Ovary (tissue), 10 donors: ENCODE measurements at regions of chr6 and their contacts with region 1.

Region 1: DNA sequence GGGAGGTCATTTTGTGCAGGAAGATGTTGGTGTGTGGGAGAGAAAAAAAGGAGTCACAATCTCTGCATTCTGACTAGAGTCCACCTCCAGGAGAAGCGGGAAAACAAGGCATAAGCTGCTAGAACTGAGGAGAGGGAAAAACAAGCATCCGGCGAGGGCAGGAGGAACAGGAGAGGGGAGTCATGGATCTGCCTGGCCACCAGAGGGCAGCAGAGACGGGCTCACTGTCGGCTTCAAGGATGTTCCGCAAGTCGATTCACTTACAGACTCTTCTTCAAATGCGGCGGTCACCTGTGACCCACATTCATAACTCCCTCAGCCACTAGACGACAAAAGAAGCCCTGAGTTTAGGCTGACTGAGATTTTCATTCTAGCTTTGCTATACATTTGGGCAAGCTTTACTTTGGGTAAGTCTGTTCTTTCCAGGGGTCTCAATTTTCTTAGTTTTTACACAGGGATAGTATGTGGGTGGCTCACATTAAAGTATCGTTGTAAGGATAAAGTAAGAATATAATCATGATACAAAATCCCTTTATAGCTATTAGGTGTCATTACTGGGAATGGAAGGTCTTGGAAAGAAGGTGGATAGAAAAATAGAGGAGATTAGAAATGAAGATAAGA is 6.6 kb upstream of the BTNL2 start:
- DNase-seq: peak; percentile 70 to 86 (median 79)
- H3K4me3 ChIP-seq: no peak overlapping the region
- H3K27ac ChIP-seq: no peak overlapping the region
- H3K4me1 ChIP-seq: no peaks in the 10 kb centered on the region
- H3K27me3 ChIP-seq: no peaks in the 10 kb centered on the region
- CTCF ChIP-seq: peak; percentile 71 to 84 (median 71)
- EP300 ChIP-seq: no peak
- POLR2A ChIP-seq: no peak

Region 2: DNA sequence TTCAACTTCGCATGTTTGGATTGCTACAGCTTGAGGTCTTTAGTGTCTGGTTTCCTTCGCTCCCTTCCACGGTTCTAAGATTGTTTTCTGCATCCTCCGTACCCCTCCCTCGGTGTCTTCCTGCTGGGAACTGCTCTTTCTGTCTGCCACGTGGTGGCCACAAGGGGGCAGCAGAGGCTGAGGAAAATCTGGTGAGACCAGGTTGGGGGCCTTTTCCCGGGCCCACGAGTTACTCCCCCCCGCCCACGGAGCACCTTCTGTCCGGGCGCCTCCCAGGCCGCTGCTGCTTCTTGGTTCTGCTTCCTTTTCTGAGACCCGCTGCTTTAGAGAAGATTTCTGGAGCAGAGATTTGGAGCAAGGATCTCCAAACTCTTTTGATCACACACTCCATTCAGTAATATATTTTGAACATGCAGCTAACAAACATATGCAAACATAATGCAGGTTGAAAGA is 168.6 kb before region 1 on chr6:
- intact Hi-C with region 1: loop called in 2 of 4 experiments (anchors 5 to 10 kb)
- DNase-seq: peak; percentile 88 to 94 (median 92)
- H3K4me3 ChIP-seq: no peak overlapping the region
- H3K27ac ChIP-seq: peak overlapping the region; percentile 0 to 30
- H3K4me1 ChIP-seq: no peaks in the 10 kb centered on the region
- H3K27me3 ChIP-seq: no peaks in the 10 kb centered on the region
- CTCF ChIP-seq: peak; percentile 82 to 91 (median 90)
- EP300 ChIP-seq: no peak
- POLR2A ChIP-seq: no peak

Region 3: GRCh38 chr6:32375739-32376529 is 37.6 kb before region 1 on chr6:
- intact Hi-C with region 1: loop called in 1 of 4 experiments (anchors 2 kb)
- DNase-seq: no peak
- H3K4me3 ChIP-seq: no peak overlapping the region
- H3K27ac ChIP-seq: no peak overlapping the region
- H3K4me1 ChIP-seq: no peaks in the 10 kb centered on the region
- H3K27me3 ChIP-seq: no peaks in the 10 kb centered on the region
- CTCF ChIP-seq: no peak
- EP300 ChIP-seq: no peak
- POLR2A ChIP-seq: no peak

Region 4: DNA sequence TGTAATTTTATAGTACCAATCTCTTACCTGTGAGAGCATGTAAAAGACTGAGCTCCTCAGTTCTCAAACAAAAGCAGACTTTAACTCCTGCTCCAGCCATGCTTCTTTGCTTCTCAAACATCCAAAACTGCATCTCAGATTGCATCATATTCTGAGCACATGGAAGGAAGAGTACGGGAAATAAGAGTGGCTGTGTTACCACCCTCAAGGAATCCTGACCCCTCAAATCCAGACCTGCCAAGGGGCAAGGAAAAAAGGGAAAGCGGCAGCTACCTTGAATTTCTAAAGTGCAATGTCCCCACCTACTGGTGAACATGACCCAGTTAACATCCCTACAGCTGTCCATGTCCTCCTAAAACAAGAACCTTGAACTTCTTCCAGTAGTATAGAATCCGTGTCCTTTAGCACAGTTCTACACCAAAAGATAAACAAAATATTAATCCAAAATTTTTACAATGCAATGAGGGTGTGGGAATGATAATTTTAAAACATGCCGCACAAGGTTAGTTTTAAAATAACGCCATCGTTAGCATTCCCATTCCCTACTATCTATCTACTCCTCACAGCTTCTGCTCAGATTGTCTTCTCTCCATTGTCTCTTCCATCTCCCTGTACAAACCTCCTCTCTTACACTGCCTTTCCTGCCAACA is 287.0 kb after region 1 on chr6:
- intact Hi-C with region 1: loop called in 1 of 4 experiments (anchors 10 kb)
- DNase-seq: peak; percentile 17 to 45 (median 21)
- H3K4me3 ChIP-seq: no peak overlapping the region
- H3K27ac ChIP-seq: no peak overlapping the region
- H3K4me1 ChIP-seq: no peaks in the 10 kb centered on the region
- H3K27me3 ChIP-seq: no peaks in the 10 kb centered on the region
- CTCF ChIP-seq: peak in 2 of 3 donors; percentile 43 to 57
- EP300 ChIP-seq: no peak
- POLR2A ChIP-seq: no peak

Region 5: DNA sequence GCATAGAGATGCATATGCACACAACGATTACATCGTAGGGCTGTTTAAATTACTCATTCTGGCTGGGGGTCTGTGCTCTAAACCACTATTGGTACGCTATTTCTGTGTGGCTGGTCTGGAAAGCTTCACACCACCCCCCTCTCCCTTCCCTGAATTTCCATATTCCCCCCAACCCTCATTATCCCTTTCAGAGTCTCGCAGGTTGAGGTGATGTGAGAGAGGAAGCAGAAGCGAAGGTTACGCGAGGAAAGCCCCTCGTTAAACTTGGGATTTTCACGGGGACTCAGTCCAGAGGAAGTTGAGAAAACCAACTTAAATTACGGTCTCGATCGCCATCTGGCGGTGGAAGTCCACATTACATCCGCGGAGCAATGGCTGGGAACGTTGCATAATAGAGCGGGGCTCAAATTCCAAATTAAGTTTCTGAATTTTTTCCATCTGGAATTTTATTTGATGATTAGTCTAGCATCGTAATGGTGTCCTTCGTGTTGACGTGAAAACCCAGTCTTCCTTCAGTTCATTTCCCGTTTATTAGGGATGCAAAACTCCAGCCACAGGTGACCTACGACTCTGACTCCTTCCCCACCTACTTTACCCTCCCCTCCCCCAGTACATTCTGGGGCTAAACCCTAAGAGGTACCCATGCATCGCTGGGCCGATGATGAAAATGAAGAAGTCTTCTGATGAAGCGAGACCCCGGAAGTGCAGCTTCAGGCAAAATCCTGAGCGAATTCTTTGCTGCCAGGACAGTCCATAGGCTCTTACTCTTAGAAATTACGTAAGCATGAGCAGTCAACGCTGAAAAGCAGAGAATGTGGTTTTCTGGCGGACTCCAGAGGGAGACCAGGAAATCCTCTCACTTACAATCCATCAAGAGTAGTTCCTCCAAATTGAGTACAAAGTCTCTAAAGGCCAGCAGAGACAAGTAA is 383.6 kb after region 1 on chr6:
- intact Hi-C with region 1: loop called in 3 of 4 experiments (anchors 10 kb)
- DNase-seq: peak; percentile 47 to 85 (median 83)
- H3K4me3 ChIP-seq: no peak overlapping the region
- H3K27ac ChIP-seq: no peak overlapping the region
- H3K4me1 ChIP-seq: no peaks in the 10 kb centered on the region
- H3K27me3 ChIP-seq: no peaks in the 10 kb centered on the region
- CTCF ChIP-seq: peak; percentile 64 to 88 (median 83)
- EP300 ChIP-seq: no peak
- POLR2A ChIP-seq: no peak